Activated CD4-positive, alpha-beta memory T cell treated with anti-CD3 and anti-CD28 coated beads for 36 hours (primary cell): ENCODE measurements at regions of chrX and their contacts with region 1.

Region 1: DNA sequence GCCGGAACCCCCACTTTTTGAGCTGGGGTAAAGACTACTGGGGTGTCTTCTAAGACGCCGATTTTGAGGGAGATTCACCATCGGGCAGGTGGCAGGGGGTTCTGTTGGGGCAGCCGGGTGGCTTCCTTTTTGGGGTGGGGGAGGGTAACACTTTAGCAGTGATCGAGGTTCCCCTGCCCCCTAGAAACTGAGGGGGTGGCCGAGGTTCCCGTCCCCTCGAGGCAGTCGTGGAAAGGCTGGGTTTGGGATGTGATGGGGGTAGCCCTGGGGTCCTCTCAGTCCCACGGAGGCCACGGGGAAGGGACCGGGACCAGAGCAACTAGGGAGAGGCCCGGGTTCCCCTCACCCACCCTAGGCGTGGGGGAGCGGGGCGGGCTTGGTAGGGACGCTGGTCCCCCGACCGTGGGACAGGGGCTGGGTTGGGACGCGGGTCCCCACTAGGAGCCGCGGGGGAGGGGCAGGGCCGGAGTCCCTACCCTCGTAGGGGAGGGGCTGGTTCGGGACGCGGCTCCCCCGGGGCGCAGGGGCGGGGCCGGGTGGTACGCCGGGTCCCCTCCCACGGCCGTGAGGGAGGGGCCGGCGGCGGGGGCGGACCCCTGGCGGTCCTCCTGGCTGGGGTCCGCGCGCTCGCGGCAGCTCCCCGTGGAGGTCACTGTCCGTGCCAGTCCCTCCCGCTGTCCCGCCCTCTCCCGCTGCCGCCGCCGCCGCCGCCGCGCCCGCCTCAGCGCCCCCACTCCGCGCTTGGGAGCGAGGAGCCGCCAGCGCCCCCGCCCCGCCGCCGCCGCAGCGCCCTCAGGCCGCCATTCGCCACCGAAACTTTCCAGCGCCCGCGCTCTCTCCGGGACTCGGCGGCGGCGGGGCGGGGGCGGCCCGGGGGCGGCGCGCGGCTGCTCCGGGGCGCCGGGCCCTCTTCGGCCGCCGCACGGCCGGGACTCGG is at the start of gene TBL1X:
- DNase-seq: peak; percentile 57
- H3K4me3 Mint-ChIP-seq: peak within 1 kb of the TSS; percentile 68
- H3K27ac Mint-ChIP-seq: peak within 1 kb of the TSS; percentile 78
- H3K4me1 Mint-ChIP-seq: peaks cover 33% of the 10 kb centered on the region
- H3K27me3 Mint-ChIP-seq: peaks cover 2% of the 10 kb centered on the region
- total RNA-seq, gene TBL1X: 21.1 to 23.5 TPM

Region 2: GRCh38 chrX:8988446-8988845 is 476.3 kb before region 1 on chrX:
- CTCF ChIA-PET with region 1: no interaction called
- POLR2A ChIA-PET with region 1: no interaction called
- intact Hi-C with region 1: loop called (anchors 10 kb)
- DNase-seq: peak; percentile 46
- H3K4me3 Mint-ChIP-seq: no peak overlapping the region
- H3K27ac Mint-ChIP-seq: no peak overlapping the region
- H3K4me1 Mint-ChIP-seq: peaks cover 20% of the 10 kb centered on the region
- H3K27me3 Mint-ChIP-seq: no peaks in the 10 kb centered on the region

Region 3: GRCh38 chrX:9285342-9285771 is 179.3 kb before region 1 on chrX:
- CTCF ChIA-PET with region 1: no interaction called
- POLR2A ChIA-PET with region 1: no interaction called
- intact Hi-C with region 1: loop called (anchors 1 kb)
- DNase-seq: peak; percentile 83
- H3K4me3 Mint-ChIP-seq: no peak overlapping the region
- H3K27ac Mint-ChIP-seq: peak overlapping the region; percentile 61
- H3K4me1 Mint-ChIP-seq: peaks cover 19% of the 10 kb centered on the region
- H3K27me3 Mint-ChIP-seq: no peaks in the 10 kb centered on the region

Region 4: DNA sequence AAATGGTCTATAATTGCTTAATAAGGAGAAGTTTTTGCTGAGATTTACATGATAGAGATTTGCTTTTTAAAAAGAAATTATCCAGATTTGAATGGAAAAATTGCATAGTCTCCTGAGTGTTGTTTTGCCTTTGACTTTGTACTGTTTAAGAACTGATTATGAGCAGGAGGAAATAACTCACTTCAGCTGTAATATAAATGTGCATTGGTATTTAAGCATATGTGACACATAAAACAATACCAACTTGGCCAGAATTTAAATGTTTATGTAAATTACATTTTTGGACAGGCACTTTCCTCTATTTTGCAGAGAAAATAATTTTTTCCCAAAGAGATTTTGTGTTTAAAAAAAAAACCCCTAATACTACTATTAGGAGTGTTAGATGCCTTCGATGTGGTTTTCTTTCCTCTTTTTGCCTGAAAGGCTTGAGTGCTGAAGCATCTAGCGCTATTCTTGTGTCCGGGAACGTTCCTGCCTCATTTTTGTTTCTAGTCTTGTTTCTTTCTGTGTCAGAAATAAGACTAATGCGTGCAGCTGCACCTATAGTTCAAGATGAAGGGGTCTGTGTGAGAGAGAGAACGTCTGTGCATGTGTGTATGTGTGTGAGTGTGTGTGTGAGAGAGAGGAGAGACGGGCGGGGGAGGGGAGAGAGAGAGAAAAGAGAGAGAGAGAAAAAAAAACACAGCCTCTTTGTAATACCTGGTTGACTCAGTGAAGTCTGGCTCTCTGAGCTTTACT is 61.0 kb after region 1 on chrX:
- CTCF ChIA-PET with region 1: no interaction called
- POLR2A ChIA-PET with region 1: no interaction called
- intact Hi-C with region 1: loop called (anchors 5 kb)
- DNase-seq: no peak
- H3K4me3 Mint-ChIP-seq: no peak overlapping the region
- H3K27ac Mint-ChIP-seq: no peak overlapping the region
- H3K4me1 Mint-ChIP-seq: peaks cover 43% of the 10 kb centered on the region
- H3K27me3 Mint-ChIP-seq: no peaks in the 10 kb centered on the region

Region 5: DNA sequence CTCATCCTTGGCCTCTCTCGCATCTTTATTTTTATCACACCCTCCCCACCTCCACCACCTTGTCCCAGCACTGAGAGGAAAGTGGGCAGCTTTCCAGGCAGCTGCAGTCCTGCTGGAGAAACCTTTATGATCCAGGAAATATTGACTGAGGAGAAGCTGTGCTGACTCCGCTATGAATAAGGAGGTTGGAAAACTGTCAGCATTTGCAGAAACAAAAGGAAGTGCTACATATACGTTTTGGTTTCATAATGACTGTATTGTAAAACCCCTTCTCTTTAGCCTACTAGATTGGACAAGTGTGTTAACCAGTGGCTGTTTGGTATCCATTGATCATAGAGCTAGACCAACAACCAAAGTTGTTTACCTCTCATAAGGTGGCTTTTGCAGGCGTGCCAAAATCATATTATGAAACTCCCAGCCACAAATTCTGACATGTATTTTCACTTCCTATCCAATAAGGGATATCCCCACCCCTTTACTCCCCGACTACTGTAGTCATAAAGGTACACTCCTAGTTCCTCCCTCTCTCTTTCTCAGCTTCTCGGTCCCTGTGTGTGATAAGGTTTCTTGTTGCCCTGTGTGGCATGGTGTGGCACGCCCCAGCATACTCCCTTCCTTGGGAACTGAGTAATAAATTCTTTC is 212.5 kb after region 1 on chrX:
- CTCF ChIA-PET with region 1: no interaction called
- POLR2A ChIA-PET with region 1: interaction called, 5 read pairs
- intact Hi-C with region 1: loop called (anchors 1 kb)
- DNase-seq: peak; percentile 43
- H3K4me3 Mint-ChIP-seq: no peak overlapping the region
- H3K27ac Mint-ChIP-seq: peak overlapping the region; percentile 14
- H3K4me1 Mint-ChIP-seq: peaks cover 20% of the 10 kb centered on the region
- H3K27me3 Mint-ChIP-seq: no peaks in the 10 kb centered on the region

Region 6: DNA sequence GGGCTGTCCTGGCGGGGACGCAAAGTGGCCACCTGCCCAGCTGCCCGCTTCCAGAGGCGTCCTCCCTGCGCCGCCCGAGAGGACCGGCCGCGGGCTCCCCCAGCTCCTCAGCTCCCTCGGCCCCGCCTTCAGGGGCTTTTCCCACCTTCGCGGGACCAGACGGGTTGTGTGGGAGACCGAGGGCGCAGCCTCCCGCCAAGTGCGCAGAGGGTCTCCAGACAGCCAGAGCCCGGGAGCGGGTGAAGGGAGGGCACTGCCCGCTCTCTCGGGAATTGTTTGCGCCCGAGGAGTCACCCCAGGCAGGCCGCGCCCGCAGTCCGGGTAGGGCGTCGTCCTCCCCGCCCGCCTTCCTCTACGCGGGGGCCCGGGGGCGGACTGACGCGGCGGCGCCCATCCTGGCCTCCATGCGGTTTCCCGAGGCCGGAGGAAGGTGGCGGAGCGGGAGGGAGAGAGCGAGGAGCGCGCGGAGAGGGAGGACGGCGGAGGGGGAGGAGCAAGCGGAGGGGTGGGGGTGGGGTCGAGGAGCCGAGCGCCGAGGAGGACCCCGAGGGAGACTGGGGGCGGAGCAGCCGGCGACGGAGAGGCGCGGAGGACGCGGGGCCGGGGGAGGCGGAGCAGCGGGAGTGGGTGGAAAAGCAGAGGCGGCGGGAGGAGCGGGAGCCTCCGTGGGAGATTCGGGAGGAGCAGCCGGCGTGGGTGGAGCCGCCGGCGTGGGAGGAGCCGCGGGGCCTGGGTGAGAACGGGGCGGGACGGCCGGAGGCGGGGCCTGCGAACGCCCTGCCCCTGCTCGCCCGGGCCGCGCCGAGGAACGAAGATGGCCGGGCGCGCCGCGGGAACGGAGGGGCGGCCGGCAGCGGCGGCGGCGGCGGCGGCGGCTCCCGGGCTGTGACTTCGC is 550.0 kb after region 1 on chrX:
- CTCF ChIA-PET with region 1: no interaction called
- POLR2A ChIA-PET with region 1: no interaction called
- intact Hi-C with region 1: loop called (anchors 10 kb)
- DNase-seq: peak; percentile 75
- H3K4me3 Mint-ChIP-seq: peak overlapping the region; percentile 68
- H3K27ac Mint-ChIP-seq: no peak overlapping the region
- H3K4me1 Mint-ChIP-seq: peaks cover 42% of the 10 kb centered on the region
- H3K27me3 Mint-ChIP-seq: peaks cover 6% of the 10 kb centered on the region